Right ventricle myocardium inferior (tissue), 1 donor: ENCODE measurements at regions of chr6 and their contacts with region 1.

Region 1: DNA sequence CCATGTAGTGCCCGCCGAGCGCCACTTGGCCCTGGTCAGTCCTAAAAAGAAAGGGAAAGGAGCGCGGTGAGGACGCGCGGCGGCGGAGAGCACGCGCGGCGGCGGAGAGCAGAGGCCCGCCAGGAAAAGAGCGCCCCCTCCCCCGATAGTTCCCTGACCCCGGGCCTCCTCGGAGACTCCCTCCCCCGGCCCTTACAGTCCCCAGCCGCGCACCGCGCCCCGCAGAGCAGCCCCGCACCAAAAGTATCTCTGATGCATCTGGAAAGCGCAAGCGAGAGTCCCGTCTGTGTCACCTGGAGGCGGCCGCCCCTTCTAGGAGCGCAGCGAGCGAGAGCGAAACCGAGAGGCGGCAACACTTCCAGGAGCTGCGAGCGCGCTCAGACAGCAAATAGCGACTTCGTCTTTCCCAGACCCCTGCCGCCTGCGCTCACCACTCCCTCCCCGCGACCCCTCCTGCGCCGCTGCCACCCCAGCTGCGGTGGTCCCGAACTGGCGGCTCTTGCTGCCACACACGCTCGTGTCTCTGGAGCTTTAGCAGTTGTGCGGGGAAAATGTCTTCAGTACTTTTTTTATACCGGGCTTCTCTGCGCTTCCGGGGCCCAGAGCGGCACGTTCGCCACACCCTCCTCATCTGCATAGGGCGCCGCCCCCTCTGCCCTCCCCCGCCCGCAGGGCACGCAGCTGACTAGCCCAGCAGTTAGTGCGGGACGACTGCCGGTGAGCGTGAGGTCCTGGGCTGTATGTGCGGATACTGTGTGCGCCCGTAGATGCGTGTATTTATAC is at the start of gene TENT5A:
- DNase-seq: peak; percentile 98
- ATAC-seq: peak; percentile 88
- total RNA-seq, gene TENT5A: 60.9 TPM

Region 2: DNA sequence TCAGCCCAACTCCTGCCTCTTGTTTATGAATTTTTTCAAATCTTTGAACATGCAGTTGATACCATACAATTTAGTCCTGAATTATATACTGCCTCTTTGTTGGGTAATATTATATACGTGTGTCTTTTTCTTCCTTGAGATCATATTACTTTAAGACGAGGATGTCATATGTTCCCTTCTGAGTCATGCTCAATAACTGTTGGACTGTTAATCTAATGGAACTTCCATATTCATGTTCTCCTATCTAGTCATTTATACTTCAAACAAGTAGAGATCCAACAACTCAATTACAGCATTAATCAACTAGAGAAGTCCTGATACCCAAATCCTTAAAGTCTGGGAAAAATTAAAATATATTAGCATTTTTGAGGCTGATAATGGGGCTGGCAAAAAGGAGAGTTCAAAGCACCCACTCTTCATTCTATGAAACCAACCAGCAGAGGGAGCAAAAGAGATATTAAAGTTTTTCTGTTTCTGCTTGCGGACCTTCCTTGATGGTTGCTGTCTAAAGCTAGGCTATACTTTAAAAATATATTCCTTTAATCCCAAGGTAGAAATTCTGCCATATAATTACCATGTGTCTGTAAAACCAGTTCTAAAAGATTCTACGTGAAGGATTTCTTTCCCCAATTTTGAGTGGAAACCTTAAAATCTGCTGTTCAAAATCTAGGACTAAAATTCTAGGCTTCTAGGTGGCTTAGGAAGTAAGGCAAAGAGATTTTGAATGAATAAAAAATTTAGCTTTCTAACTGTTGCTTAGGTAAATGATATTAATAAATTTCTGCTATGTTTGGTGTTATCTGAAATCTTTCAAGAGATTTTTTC is 1147.0 kb before region 1 on chr6:
- intact Hi-C with region 1: loop called (anchors 10 kb)
- DNase-seq: no peak
- ATAC-seq: no peak

Region 3: DNA sequence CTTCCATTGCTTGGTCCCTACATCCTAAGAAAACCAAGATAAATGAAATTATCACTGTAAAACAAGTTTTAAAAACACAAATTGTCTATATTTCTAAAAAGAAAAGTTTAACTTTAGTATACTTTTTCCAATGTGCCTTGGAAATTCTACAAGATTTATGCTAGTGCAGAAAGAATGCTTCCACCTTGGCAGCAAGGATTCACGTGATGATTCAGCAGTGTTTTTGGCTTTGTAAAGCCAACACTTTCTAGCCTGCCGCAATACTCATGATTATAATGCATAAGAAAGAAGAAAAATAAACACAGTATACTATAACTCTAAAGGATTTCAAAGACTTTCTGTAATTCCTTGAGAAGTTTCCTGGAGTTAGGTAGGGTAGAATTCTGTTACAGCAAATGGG is 442.5 kb before region 1 on chr6:
- intact Hi-C with region 1: loop called (anchors 5 kb)
- DNase-seq: no peak
- ATAC-seq: no peak

Region 4: DNA sequence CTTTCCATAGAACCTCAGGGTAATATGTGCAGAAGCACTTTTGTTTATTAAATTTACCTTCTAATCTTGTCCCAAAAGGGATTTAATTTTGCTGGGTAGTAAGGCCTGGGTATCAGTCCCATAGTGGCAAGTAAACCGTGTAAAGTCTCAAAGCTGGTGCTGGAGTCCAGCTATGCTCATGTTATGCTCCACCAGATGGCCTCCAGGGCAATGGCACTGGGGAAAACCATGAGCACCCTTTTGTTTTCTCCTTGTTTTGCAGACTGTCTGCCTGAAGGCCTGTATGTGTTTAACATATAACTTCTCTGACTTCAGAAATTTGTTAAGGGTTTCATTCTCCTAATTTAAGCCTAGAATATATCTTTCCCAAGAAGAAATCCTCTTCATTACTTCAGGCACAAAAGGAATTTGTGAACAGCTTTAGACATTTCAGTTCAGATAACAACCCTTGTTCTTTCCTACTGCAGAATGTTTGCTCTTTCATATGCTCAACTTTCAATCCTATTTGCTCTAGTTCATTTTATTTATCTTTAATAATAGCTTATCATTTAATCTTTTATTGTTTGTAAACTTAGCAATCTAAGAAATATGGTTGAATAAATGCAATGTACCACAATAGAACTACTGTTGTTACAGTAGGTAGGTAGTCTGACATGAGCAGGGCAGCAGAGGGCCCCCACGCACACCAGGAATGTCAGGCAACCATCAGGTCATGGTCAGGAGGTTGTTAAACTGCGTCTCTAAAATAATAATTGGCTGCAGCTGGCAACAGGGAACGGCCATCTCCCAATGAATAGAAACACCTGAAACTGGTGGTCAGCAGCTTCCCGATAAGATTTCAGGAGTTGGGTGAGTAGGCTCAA is 162.6 kb before region 1 on chr6:
- intact Hi-C with region 1: loop called (anchors 2 kb)
- DNase-seq: peak; percentile 68
- ATAC-seq: peak; percentile 57

Region 5: GRCh38 chr6:81683928-81684327 is 68.4 kb before region 1 on chr6:
- intact Hi-C with region 1: loop called (anchors 5 kb)
- DNase-seq: no peak
- ATAC-seq: no peak

Region 6: DNA sequence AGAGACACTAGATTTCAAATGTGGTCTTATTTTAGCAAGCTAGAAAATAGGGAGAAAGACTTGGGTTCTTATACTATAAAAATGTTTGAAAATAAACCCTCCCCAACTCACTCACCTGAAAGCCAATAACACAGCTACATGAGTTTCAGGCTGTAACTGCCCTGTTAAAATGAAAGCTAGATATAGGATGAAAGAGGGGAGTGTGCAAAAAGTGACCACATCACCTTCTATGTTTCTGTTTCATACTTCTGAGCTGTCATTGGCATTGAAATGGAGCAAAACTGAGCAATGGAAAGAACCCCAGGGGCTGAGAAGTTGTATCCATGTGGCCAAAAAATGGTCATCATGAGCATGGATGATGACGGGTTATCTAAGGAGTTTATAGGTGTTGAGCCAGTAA is 148.3 kb after region 1 on chr6:
- intact Hi-C with region 1: loop called (anchors 2 kb)
- DNase-seq: no peak
- ATAC-seq: no peak

Region 7: DNA sequence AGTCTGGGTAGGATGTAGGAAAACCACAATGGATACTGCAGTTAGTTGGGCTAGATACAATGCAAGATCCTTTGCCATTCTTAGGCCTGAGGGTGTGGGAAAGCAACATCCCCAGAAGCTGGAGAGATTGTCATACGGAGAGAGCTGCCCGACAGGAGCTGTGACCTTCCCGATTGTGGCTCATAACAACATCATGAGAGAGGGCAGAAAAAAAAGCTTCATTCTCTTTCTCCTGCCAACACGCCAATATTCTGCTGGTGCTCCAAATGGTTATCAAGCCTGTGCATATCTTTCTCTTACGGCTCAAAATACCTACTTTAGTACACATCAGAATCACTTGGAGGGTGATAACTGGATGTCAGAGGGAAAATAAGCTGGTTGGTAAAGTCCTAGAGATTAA is 414.2 kb after region 1 on chr6:
- intact Hi-C with region 1: loop called (anchors 2 kb)
- DNase-seq: no peak
- ATAC-seq: peak; percentile 90